A673 (cell line): ENCODE measurements at regions of chr1 and their contacts with region 1.

Region 1: DNA sequence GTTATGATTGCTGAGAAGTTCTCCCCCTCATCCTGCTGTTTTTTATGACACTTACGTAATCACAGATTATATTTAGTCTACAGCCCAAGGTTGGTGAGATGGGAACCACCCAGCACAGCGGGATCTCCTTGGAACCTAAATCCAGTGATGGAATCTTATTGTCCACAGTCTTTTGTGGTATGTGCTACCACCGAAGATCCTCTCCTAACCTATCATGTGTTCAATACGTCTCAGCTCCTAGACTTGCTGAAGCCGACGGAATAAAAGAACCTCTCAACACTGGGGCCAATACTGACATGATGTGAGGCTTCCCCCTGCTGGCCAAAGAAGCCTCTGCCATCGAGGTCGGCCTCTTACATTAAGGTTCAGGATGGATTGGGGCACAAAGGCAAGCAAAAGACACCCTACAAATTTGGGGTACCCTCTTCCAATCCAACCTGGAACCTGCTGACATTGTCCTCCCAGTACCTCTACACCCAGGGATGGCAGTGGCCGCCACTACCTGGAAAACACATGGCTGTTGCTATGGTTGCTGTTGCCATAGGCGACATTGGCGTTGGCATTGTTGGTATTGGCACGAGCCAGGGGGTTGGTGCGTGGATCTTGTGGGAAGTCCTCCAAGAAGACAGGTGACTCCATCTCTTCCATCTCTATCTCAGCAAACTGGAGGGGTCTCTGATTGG is 19.4 kb upstream of the KIF21B start:
- DNase-seq: peak; percentile 82
- H3K4me3 ChIP-seq: no peak overlapping the region
- H3K27ac ChIP-seq: no peak overlapping the region
- H3K4me1 ChIP-seq: no peaks in the 10 kb centered on the region
- H3K27me3 ChIP-seq: no peaks in the 10 kb centered on the region
- CTCF ChIP-seq: peak; percentile 96

Region 2: GRCh38 chr1:200558866-200559459 is 484.0 kb before region 1 on chr1:
- CTCF ChIA-PET with region 1: interaction called, 3 read pairs
- POLR2A ChIA-PET with region 1: no interaction called
- intact Hi-C with region 1: loop called (anchors 5 kb)
- DNase-seq: peak; percentile 53
- H3K4me3 ChIP-seq: no peak overlapping the region
- H3K27ac ChIP-seq: no peak overlapping the region
- H3K4me1 ChIP-seq: no peaks in the 10 kb centered on the region
- H3K27me3 ChIP-seq: no peaks in the 10 kb centered on the region
- CTCF ChIP-seq: peak; percentile 73

Region 3: GRCh38 chr1:200628223-200628881 is 414.6 kb before region 1 on chr1:
- CTCF ChIA-PET with region 1: no interaction called
- POLR2A ChIA-PET with region 1: no interaction called
- intact Hi-C with region 1: loop called (anchors 5 kb)
- DNase-seq: no peak
- H3K4me3 ChIP-seq: no peak overlapping the region
- H3K27ac ChIP-seq: no peak overlapping the region
- H3K4me1 ChIP-seq: peaks cover 7% of the 10 kb centered on the region
- H3K27me3 ChIP-seq: no peaks in the 10 kb centered on the region
- CTCF ChIP-seq: no peak

Region 4: DNA sequence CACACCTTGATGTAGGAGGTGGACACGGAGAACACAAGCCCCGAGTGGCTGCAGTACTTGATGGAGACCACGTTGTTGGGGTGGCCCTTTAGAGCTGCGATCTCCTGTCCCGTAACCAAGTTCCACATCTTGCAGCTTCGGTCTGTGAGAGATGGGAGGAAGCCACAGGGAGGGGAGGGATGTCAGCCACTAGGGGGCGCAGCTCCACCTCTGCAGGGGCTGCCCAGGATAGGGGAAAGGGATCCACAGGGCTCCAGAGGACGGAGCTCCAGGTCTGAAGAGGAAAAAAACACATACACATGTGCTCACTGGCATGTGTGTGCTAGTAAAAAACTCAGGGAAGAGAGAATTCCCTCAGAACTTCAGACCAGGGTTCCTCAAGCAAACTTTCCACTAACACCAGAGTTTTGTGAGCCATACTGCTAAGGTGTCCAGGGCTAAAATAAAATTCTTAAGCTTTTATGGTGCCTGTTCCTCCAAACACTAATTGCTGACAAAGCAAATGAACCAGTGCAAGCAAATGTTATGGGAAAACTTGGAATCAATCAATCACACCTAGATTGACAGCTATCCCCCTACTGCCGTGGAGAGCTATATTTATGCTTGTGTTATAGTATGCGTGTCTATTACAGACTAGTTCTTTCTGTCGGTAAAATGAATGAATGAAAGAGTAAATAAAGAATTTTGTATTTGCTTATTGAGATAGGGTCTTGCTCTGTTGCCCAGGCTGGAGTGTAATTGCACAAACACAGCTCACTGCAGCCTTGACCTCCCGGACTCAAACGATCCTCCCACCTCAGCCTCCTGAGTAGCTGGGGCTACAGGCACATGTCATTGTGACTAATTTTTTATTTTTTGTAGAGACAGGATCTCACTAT is 63.1 kb before region 1 on chr1:
- CTCF ChIA-PET with region 1: interaction called, 17 read pairs
- POLR2A ChIA-PET with region 1: no interaction called
- intact Hi-C with region 1: loop called (anchors 1 kb)
- DNase-seq: peak; percentile 69
- H3K4me3 ChIP-seq: no peak overlapping the region
- H3K27ac ChIP-seq: no peak overlapping the region
- H3K4me1 ChIP-seq: no peaks in the 10 kb centered on the region
- H3K27me3 ChIP-seq: no peaks in the 10 kb centered on the region
- CTCF ChIP-seq: peak; percentile 80

Region 5: GRCh38 chr1:201229771-201230635 is 187.1 kb after region 1 on chr1:
- CTCF ChIA-PET with region 1: no interaction called
- POLR2A ChIA-PET with region 1: no interaction called
- intact Hi-C with region 1: no loop called
- DNase-seq: no peak
- H3K4me3 ChIP-seq: no peak overlapping the region
- H3K27ac ChIP-seq: no peak overlapping the region
- H3K4me1 ChIP-seq: no peaks in the 10 kb centered on the region
- H3K27me3 ChIP-seq: no peaks in the 10 kb centered on the region
- CTCF ChIP-seq: no peak